CD4-positive, alpha-beta memory T cell (primary cell): ENCODE measurements at regions of chr1 and their contacts with region 1.

Region 1: GRCh38 chr1:26102526-26102925 is 9.1 kb upstream of the PDIK1L start:
- DNase-seq: no peak
- H3K4me3 ChIP-seq: no peak overlapping the region
- H3K4me3 Mint-ChIP-seq: no peak overlapping the region
- H3K27ac ChIP-seq: no peak overlapping the region
- H3K27ac Mint-ChIP-seq: peak overlapping the region in 1 of 7 donors; percentile 17
- H3K4me1 ChIP-seq: no peaks in the 10 kb centered on the region
- H3K4me1 Mint-ChIP-seq: peaks cover 3 to 5% (median 4%) of the 10 kb centered on the region in 4 donors
- H3K27me3 ChIP-seq: no peaks in the 10 kb centered on the region
- H3K27me3 Mint-ChIP-seq: peaks cover 1 to 2% of the 10 kb centered on the region in 2 donors

Region 2: GRCh38 chr1:26035959-26036755 is 66.4 kb before region 1 on chr1:
- CTCF ChIA-PET with region 1: interaction called, 5 read pairs
- POLR2A ChIA-PET with region 1: no interaction called
- intact Hi-C with region 1: loop called (anchors 2 kb)
- DNase-seq: peak; percentile 67 to 81 (median 69)
- H3K4me3 ChIP-seq: peak overlapping the region; percentile 48 to 84
- H3K4me3 Mint-ChIP-seq: peak overlapping the region; percentile 94 to 99 (median 95)
- H3K27ac ChIP-seq: peak overlapping the region; percentile 77
- H3K27ac Mint-ChIP-seq: peak overlapping the region; percentile 89 to 97 (median 95)
- H3K4me1 ChIP-seq: peaks cover 15% of the 10 kb centered on the region
- H3K4me1 Mint-ChIP-seq: peaks cover 2 to 21% (median 11%) of the 10 kb centered on the region in 4 donors
- H3K27me3 ChIP-seq: no peaks in the 10 kb centered on the region
- H3K27me3 Mint-ChIP-seq: peaks cover 2 to 3% of the 10 kb centered on the region in 2 donors

Region 3: DNA sequence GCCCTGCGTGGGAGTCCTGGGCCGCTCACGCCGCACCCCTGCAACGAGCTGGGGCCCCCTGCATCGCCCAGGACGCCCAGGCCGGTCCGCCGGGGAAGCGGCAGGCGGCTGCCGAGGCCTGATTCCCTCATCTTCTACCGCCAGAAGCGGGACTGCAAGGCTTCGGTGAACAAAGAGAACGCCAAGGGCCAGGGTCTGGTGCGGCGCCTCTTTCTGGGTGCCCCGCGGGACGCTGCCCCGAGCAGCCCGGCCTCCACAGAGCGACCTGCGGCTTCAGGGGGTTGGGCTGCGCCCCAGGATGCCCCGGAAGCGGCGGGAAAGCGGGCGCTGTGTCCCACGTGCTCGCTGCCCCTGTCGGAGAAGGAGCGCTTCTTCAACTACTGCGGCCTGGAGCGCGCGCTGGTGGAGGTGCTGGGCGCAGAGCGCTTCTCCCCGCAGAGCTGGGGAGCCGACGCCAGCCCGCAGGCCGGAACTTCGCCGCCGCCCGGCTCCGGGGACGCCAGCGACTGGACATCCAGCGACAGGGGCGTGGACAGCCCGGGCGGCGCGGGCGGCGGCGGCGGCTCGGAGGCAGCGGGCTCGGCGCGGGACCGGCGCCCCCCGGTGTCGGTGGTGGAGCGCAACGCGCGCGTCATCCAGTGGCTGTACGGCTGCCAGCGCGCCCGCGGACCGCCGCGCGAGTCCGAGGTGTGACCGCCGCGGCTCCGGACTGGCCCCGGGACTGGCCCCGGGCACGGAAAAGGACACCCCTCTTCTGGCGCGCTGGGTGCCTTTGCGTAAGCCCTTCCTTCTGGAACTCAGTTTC is 59.1 kb after region 1 on chr1:
- CTCF ChIA-PET with region 1: interaction called, 8 read pairs
- POLR2A ChIA-PET with region 1: no interaction called
- intact Hi-C with region 1: loop called (anchors 1 kb)
- DNase-seq: peak in 4 of 5 donors; percentile 20 to 35 (median 26)
- H3K4me3 ChIP-seq: no peak overlapping the region
- H3K4me3 Mint-ChIP-seq: peak overlapping the region in 7 of 8 donors; percentile 40 to 74 (median 59)
- H3K27ac ChIP-seq: no peak overlapping the region
- H3K27ac Mint-ChIP-seq: no peak overlapping the region
- H3K4me1 ChIP-seq: peaks cover 16% of the 10 kb centered on the region
- H3K4me1 Mint-ChIP-seq: peaks cover under 1 to 11% (median 8%) of the 10 kb centered on the region in 4 donors
- H3K27me3 ChIP-seq: peaks cover 7% of the 10 kb centered on the region
- H3K27me3 Mint-ChIP-seq: peaks cover 14 to 27% of the 10 kb centered on the region in 2 donors